AG04450 (cell line): ENCODE measurements at regions of chr4 and their contacts with region 1.

Region 1: DNA sequence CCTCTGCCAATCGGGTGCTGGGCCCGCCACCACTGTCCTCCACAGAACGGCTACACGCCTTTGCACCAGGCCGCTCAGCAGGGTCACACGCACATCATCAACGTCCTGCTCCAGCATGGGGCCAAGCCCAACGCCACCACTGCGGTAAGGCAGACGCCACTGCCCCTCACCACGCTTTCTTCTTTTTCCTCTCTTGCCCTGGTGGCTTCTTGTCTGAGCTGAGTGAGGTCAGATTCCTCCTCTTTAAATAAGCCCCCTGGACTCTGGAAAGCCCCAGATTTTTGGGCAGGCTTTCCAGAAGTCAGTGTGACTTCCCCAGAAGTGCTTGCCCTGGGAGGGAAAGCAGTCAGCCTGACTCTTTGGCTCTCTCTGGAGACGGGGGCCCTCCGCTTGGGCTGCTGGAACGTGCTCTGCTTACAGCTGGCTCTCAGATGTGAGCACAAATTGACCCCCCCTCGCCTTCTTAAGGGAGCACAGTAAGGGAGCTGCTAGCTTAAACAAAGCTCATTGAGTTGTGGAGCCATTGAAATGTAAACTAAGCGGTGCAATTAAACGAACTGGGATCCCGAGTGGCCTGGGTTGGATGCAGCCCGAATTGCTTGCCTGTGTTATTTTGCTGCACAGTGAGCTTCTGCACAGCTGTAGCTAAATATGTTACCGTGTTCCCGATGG is 243.1 kb downstream of the ANK2 start:
- DNase-seq: peak; percentile 57
- H3K4me3 ChIP-seq: peak overlapping the region; percentile 15; the same call in 1 of the 2 replicates
- H3K27ac ChIP-seq: peak overlapping the region; percentile 66
- H3K27me3 ChIP-seq: no peaks in the 10 kb centered on the region
- CTCF ChIP-seq: no peak

Region 2: GRCh38 chr4:113069212-113069892 is 223.2 kb before region 1 on chr4:
- CTCF ChIA-PET with region 1: no interaction called
- POLR2A ChIA-PET with region 1: no interaction called
- DNase-seq: no peak
- H3K4me3 ChIP-seq: no peak overlapping the region
- H3K27ac ChIP-seq: no peak overlapping the region
- H3K27me3 ChIP-seq: no peaks in the 10 kb centered on the region
- CTCF ChIP-seq: no peak

Region 3: GRCh38 chr4:113256946-113257345 is 35.6 kb before region 1 on chr4:
- CTCF ChIA-PET with region 1: no interaction called
- POLR2A ChIA-PET with region 1: no interaction called
- DNase-seq: no peak
- H3K4me3 ChIP-seq: no peak overlapping the region
- H3K27ac ChIP-seq: no peak overlapping the region
- H3K27me3 ChIP-seq: peaks cover 2% of the 10 kb centered on the region
- CTCF ChIP-seq: no peak

Region 4: GRCh38 chr4:113278324-113278934 is 14.1 kb before region 1 on chr4:
- CTCF ChIA-PET with region 1: interaction called, 63 read pairs
- POLR2A ChIA-PET with region 1: no interaction called
- DNase-seq: peak; percentile 61
- H3K4me3 ChIP-seq: no peak overlapping the region
- H3K27ac ChIP-seq: no peak overlapping the region
- H3K27me3 ChIP-seq: no peaks in the 10 kb centered on the region
- CTCF ChIP-seq: peak; percentile 97